ENCODE measurements at regions of chr11 and their contacts with region 1.

Region 1: DNA sequence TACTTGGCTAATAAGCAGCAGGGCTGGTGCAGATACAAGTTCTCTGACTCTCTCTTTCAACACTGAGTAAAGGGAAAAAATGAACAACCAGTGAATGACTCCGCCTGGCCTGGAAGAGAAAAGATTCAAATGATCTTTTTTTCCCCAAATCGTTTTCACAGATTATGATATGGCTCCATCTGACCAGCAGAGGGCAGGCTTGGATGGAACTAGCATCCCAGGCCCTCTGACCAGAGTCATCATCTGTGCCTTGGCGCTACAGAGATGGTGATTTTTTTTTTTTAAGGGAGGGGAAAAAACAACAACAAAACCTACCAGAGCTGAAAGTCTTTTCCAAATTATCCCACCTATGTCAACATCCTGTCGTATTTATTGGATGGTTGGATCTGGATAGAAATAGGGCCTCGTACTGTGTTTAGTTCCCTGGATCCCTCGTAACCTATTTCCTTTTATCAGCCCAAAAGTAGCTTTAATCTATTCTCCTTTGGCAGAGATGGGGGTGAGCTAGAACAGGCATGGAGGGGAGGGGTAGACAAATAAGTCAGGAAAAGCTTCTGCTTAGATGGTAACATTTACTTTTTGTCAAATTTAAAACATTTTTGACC is 69.7 kb downstream of the PRSS23 start:
- DNase-seq: peak; percentile 73
- H3K4me3 Mint-ChIP-seq: no peak overlapping the region
- H3K27ac Mint-ChIP-seq: no peak overlapping the region
- H3K4me1 Mint-ChIP-seq: no peaks in the 10 kb centered on the region
- H3K27me3 Mint-ChIP-seq: no peaks in the 10 kb centered on the region

Region 2: DNA sequence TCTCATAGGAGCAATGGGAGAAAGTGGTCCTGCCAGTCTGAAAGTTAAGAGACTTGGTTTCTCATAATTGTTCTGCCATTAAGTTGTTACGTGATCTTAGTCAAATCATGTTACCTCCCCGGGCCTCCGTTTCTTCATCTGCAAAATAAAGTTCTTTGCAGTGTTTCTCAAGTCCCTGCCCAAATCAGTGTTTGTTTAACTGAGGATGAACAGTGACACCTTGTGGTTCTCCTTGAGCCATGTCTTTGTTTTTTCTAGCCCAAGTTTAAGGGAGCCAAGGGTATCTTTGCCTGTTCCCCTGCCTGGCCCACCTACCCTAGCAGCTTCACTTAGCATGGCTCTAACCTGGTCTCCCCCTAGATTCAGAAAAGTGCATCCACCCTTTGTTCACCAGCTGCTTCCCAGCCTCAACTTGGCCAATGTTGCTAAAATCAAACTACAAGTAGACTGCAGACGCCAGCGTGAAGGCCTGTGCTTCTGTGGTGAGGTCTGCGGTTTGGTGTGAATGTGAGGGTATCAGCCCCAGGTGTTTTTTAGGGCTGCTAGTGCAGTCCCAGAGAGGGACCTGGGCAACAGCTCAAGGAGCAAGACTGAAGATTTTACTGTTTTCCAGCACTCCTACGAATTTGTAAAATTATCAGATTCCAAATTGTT is 49.6 kb after region 1 on chr11:
- CTCF ChIA-PET with region 1: interaction called, 38 read pairs
- intact Hi-C with region 1: loop called (anchors 1 kb)
- DNase-seq: peak; percentile 19
- H3K4me3 Mint-ChIP-seq: no peak overlapping the region
- H3K27ac Mint-ChIP-seq: no peak overlapping the region
- H3K4me1 Mint-ChIP-seq: peaks cover 4% of the 10 kb centered on the region
- H3K27me3 Mint-ChIP-seq: no peaks in the 10 kb centered on the region

Measured in activated naive CD4-positive, alpha-beta T cell treated with anti-CD3 and anti-CD28 coated beads for 36 hours (primary cell).